Adrenal gland (tissue), 19 donors: ENCODE measurements at regions of chr9 and their contacts with region 1.

Region 1: GRCh38 chr9:70602321-70603019 is 188.0 kb upstream of the KLF9 start:
- DNase-seq: peak; percentile 43 to 89 (median 66)
- H3K4me3 ChIP-seq: no peak overlapping the region
- H3K27ac ChIP-seq: peak overlapping the region in 4 of 5 donors; percentile 66 to 92 (median 78)
- H3K4me1 ChIP-seq: peaks cover 8 to 25% of the 10 kb centered on the region in 2 donors
- H3K27me3 ChIP-seq: no peaks in the 10 kb centered on the region
- CTCF ChIP-seq: peak; percentile 51 to 96 (median 88)
- POLR2A ChIP-seq: no peak

Region 2: GRCh38 chr9:70136632-70137031 is 465.8 kb before region 1 on chr9:
- intact Hi-C with region 1: no loop called
- DNase-seq: no peak
- H3K4me3 ChIP-seq: no peak overlapping the region
- H3K27ac ChIP-seq: no peak overlapping the region
- H3K4me1 ChIP-seq: no peaks in the 10 kb centered on the region
- H3K27me3 ChIP-seq: no peaks in the 10 kb centered on the region
- CTCF ChIP-seq: no peak
- POLR2A ChIP-seq: no peak

Region 3: GRCh38 chr9:70340572-70340971 is 261.9 kb before region 1 on chr9:
- intact Hi-C with region 1: loop called (anchors 5 to 10 kb)
- DNase-seq: no peak
- H3K4me3 ChIP-seq: no peak overlapping the region
- H3K27ac ChIP-seq: no peak overlapping the region
- H3K4me1 ChIP-seq: peaks cover 0 to 8% of the 10 kb centered on the region in 2 donors
- H3K27me3 ChIP-seq: no peaks in the 10 kb centered on the region
- CTCF ChIP-seq: peak; percentile 45 to 81 (median 65)
- POLR2A ChIP-seq: no peak

Region 4: GRCh38 chr9:70352802-70353201 is 249.7 kb before region 1 on chr9:
- intact Hi-C with region 1: loop called (anchors 5 to 10 kb)
- DNase-seq: no peak
- H3K4me3 ChIP-seq: no peak overlapping the region
- H3K27ac ChIP-seq: no peak overlapping the region
- H3K4me1 ChIP-seq: peaks cover 0 to 9% of the 10 kb centered on the region in 2 donors
- H3K27me3 ChIP-seq: no peaks in the 10 kb centered on the region
- CTCF ChIP-seq: peak; percentile 29 to 76 (median 59)
- POLR2A ChIP-seq: no peak

Region 5: GRCh38 chr9:70413798-70414775 is 188.4 kb before region 1 on chr9 and contains the start of gene KLF9:
- intact Hi-C with region 1: loop called (anchors 5 to 10 kb)
- DNase-seq: peak; percentile 94 to 99 (median 98)
- H3K4me3 ChIP-seq: peak within 1 kb of the TSS; percentile 66 to 99 (median 87)
- H3K27ac ChIP-seq: peak within 1 kb of the TSS; percentile 99 to 100 (median 99)
- H3K4me1 ChIP-seq: peaks cover 41 to 61% of the 10 kb centered on the region in 2 donors
- H3K27me3 ChIP-seq: no peaks in the 10 kb centered on the region
- CTCF ChIP-seq: no peak
- POLR2A ChIP-seq: peak; percentile 84 to 98
- total RNA-seq, gene KLF9: 2.2 to 80.7 (median 44.3) TPM

Region 6: GRCh38 chr9:70484210-70485130 is 118.0 kb before region 1 on chr9:
- intact Hi-C with region 1: loop called (anchors 5 to 10 kb)
- DNase-seq: peak; percentile 43 to 82 (median 58)
- H3K4me3 ChIP-seq: no peak overlapping the region
- H3K27ac ChIP-seq: peak overlapping the region; percentile 37 to 90 (median 82)
- H3K4me1 ChIP-seq: peaks cover 11 to 78% of the 10 kb centered on the region in 2 donors
- H3K27me3 ChIP-seq: no peaks in the 10 kb centered on the region
- CTCF ChIP-seq: peak; percentile 76 to 92 (median 84)
- POLR2A ChIP-seq: no peak